ENCODE measurements at regions of chr16 and their contacts with region 1.

Region 1: DNA sequence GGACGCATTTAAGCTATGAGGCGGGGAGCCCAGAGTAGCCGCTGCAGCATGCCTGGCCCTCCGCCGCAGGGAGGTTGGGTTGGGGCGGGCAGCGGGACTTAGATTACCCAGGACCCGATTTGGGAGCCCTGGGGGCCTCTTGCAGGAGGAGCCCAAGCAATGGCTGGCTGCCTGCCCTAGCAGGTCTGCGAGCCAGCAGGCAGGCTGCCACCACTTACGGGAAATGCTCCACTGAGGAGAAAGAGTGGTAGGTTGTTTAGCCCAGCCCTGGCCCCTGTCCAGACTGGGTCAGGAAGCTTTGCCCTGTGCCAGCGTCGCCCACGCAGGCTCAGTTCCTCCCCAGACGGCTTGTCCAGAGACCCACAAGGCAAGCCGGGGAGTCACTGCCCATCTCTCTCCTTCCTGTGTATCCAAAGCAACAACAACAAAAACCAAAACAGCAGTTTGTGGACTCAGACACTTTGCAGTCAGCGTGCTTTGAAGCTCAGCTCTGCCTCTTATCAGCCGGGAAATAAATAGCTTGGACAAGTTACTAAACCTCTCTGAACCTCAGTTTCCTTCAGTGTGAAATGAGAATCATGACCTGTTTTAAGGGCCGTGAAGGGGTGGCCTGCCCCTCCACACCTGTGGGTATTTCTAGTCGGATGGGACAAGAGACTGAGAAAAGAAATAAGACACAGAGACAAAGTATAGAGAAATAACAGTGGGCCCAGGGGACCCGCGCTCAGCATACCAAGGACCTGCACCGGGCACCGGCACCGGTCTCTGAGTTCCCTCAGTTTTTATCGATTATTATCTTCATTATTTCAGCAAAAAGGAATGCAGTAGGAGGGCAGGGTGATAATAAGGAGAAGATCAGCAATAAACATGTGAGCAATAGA is 10.5 kb upstream of the TVP23A start:
- DNase-seq: peak; percentile 91 to 93
- ATAC-seq: peak; percentile 78 to 82 (median 79)
- H3K4me3 ChIP-seq: peak overlapping the region; percentile 32
- H3K27ac ChIP-seq: peak overlapping the region; percentile 88
- H3K4me1 ChIP-seq: peaks cover 20% of the 10 kb centered on the region
- H3K27me3 ChIP-seq: no peaks in the 10 kb centered on the region
- CTCF ChIP-seq: no peak

Region 2: DNA sequence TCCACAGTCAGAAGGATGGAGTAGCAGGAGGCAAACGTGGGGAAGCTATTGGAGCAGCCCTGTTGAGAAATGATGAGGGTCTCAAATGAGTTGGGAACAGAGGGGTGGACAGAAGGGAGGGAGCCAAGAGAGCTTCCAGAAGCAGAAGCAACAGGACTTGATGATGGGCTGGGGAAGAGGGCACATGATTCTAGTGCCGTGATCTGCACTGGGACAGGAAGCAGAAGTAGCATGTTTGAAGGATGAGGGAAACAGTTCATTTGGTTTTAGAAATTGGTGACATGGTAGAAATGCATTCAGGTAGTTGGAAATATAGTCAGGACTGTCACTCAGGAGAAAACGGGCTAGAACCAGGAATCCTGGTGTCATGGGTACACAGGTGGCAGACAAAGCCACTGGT is 268.1 kb before region 1 on chr16:
- intact Hi-C with region 1: loop called in 1 of 2 experiments (anchors 5 kb)
- DNase-seq: no peak
- ATAC-seq: no peak
- H3K4me3 ChIP-seq: no peak overlapping the region
- H3K27ac ChIP-seq: peak overlapping the region; percentile 96
- H3K4me1 ChIP-seq: peaks cover 65% of the 10 kb centered on the region
- H3K27me3 ChIP-seq: no peaks in the 10 kb centered on the region
- CTCF ChIP-seq: no peak

Region 3: GRCh38 chr16:10743610-10744393 is 85.3 kb before region 1 on chr16 and contains the start of gene NUBP1:
- intact Hi-C with region 1: loop called in 1 of 2 experiments (anchors 5 kb)
- DNase-seq: peak; percentile 99
- ATAC-seq: peak; percentile 97 to 98 (median 98)
- H3K4me3 ChIP-seq: peak within 1 kb of the TSS; percentile 58
- H3K27ac ChIP-seq: peak within 1 kb of the TSS; percentile 86
- H3K4me1 ChIP-seq: peaks cover 23% of the 10 kb centered on the region
- H3K27me3 ChIP-seq: no peaks in the 10 kb centered on the region
- CTCF ChIP-seq: no peak
- total RNA-seq, gene NUBP1: 24.7 to 38.1 (median 29.0) TPM

Region 4: DNA sequence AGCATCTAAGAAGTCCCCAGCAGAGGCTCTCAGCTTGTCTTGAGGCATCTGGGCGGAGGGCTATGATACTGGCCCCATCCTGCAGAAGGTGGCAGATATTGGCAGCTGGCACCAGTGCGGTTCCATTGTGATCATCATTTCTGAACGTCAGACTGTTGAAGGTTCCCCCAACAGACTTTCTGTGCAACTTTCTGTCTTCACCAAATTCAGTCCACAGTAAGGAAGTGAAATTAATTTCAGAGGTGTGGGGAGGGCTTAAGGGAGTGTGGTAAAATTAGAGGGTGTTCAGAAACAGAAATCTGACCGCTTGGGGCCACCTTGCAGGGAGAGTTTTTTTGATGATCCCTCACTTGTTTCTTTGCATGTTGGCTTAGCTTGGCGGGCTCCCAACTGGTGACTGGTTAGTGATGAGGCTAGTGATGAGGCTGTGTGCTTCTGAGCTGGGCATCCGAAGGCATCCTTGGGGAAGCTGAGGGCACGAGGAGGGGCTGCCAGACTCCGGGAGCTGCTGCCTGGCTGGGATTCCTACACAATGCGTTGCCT is 47.8 kb after region 1 on chr16 and contains the start of gene CIITA:
- intact Hi-C with region 1: loop called in 1 of 2 experiments (anchors 5 kb)
- DNase-seq: peak; percentile 76 to 82
- ATAC-seq: peak in 2 of 4 donors; percentile 16 to 42
- H3K4me3 ChIP-seq: peak within 1 kb of the TSS; percentile 73
- H3K27ac ChIP-seq: no peak within 1 kb of the TSS
- H3K4me1 ChIP-seq: no peaks in the 10 kb centered on the region
- H3K27me3 ChIP-seq: peaks cover 0 to 23% (median 3%) of the 10 kb centered on the region in 3 donors
- CTCF ChIP-seq: no peak
- total RNA-seq, gene CIITA: 2.9 to 13.8 (median 5.2) TPM